ENCODE measurements at regions of chr1 and their contacts with region 1.

Region 1: DNA sequence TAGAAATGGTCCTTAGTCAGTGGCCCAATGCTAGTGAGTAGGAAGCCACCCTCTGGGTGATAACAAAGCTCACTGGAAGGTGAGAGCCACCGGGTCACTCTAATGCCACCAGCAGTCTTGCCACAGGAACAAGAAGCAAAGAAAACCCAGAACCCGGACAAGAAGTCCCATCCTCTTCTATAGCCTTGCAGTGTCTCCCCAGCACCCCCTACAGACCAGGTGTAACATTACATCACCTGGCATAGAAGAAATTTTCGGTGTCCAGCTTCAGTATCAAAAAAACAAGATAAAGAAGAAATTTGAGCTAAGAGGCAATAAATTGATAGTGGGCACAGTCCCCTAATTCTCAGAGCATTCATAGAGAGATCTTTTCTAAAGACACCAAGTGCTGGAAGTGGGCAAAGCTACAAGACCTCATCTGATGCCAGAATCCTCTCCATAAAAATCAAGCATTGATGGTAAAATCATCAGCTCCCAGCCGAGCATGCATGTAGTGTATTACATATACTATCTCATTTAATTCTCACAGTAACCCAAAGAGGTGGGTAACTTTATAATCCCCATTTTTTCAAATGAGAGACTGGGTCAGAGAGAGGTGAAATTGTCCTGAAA is 491.0 kb downstream of the MATN1 start:
- DNase-seq: peak; percentile 38
- H3K4me3 Mint-ChIP-seq: no peak overlapping the region
- H3K27ac Mint-ChIP-seq: no peak overlapping the region
- H3K4me1 Mint-ChIP-seq: no peaks in the 10 kb centered on the region
- H3K27me3 Mint-ChIP-seq: peaks cover 61% of the 10 kb centered on the region
- CTCF ChIP-seq: peak; percentile 61

Region 2: DNA sequence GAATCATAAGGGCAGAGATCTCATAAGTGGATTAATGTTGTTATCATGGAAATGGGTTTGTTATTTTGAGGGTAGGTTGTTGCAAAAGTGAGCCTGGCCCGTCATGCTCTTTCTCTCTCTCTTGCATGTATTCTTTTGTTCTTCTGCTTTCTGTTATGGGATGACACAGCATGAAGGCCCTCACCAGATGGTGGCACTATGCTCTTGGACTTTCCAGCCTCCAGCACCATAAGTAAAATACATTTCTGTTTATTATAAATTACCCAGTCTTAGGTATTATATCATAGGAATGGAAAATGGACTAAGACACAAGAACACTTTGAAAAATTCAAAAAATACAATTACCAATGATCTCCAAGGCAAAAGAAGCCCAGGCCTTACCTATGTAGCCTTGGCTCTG is 320.0 kb before region 1 on chr1:
- CTCF ChIA-PET with region 1: interaction called, 3 read pairs
- POLR2A ChIA-PET with region 1: no interaction called
- intact Hi-C with region 1: loop called (anchors 5 kb)
- DNase-seq: peak; percentile 53
- H3K4me3 Mint-ChIP-seq: no peak overlapping the region
- H3K27ac Mint-ChIP-seq: no peak overlapping the region
- H3K4me1 Mint-ChIP-seq: no peaks in the 10 kb centered on the region
- H3K27me3 Mint-ChIP-seq: peaks cover 38% of the 10 kb centered on the region
- CTCF ChIP-seq: peak; percentile 36

Region 3: GRCh38 chr1:30372792-30373433 is 140.5 kb after region 1 on chr1:
- CTCF ChIA-PET with region 1: no interaction called
- POLR2A ChIA-PET with region 1: no interaction called
- intact Hi-C with region 1: no loop called
- DNase-seq: peak; percentile 6
- H3K4me3 Mint-ChIP-seq: no peak overlapping the region
- H3K27ac Mint-ChIP-seq: peak overlapping the region; percentile 23
- H3K4me1 Mint-ChIP-seq: no peaks in the 10 kb centered on the region
- H3K27me3 Mint-ChIP-seq: peaks cover 36% of the 10 kb centered on the region
- CTCF ChIP-seq: no peak